Heart right ventricle (tissue), 16 donors: ENCODE measurements at regions of chr10 and their contacts with region 1.

Region 1: GRCh38 chr10:125822878-125823662 is at the starts of genes BCCIP and UROS:
- DNase-seq: peak; percentile 92
- ATAC-seq: peak; percentile 93 to 98 (median 96)
- H3K4me3 ChIP-seq: peak within 1 kb of the TSS; percentile 76 to 100 (median 93)
- H3K27ac ChIP-seq: peak within 1 kb of the TSS; percentile 80 to 99 (median 91)
- H3K4me1 ChIP-seq: peaks cover 15 to 47% (median 32%) of the 10 kb centered on the region in 9 donors
- H3K27me3 ChIP-seq: no peaks in the 10 kb centered on the region
- CTCF ChIP-seq: peak in 1 of 9 donors; percentile 9
- total RNA-seq, gene BCCIP: 35.6 to 53.1 (median 44.3) TPM
- total RNA-seq, gene UROS: 53.5 to 84.3 (median 70.8) TPM

Region 2: DNA sequence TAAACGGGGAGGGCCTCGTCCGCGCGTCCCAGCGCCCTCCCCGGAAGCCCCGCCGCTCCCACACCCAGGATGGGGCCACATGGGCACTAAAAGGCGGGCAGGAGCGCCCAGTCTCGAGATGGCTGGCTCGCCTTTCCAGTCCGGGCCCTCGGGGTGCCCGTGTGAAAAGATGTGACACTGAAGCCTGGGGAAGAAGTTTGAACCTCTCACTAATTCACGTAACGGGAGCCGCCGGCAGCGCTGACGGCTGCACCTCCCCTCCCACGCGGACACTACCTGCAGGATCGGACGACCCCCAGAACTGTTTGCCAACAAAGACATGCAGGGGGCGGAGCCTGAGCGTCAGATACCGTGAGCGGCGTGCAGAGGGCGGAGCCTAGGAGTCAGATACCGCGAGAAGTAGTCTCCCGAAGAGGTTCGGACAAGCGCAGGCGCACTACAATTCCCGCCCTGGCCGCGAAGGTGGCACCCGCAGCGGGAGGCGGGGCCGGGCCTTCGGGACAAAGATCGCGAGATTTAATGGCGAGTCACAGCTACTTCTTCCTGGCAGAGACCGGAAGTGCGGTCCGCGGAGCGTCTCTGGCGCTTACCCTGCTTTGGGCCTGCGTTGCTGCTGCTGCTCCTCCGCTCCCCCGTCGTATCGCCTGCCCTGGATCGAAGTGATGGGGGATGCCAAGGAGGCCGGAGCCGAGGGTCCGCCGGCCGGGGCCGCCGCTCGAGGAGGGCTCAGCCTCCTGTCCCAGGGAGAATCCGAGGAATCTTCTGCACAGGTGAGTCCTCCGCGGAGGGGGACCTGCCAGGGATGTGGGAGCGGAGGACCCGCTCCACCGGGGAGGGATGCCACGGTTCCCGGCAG is 103.7 kb before region 1 on chr10 and contains the start of gene EDRF1:
- intact Hi-C with region 1: loop called in 4 of 10 experiments (anchors 5 to 10 kb)
- DNase-seq: peak; percentile 99
- ATAC-seq: peak; percentile 100
- H3K4me3 ChIP-seq: peak within 1 kb of the TSS; percentile 83 to 97 (median 90)
- H3K27ac ChIP-seq: peak within 1 kb of the TSS; percentile 65 to 94 (median 88)
- H3K4me1 ChIP-seq: peaks cover 5 to 29% (median 15%) of the 10 kb centered on the region in 9 donors
- H3K27me3 ChIP-seq: no peaks in the 10 kb centered on the region
- CTCF ChIP-seq: no peak
- total RNA-seq, gene EDRF1: 7.7 to 13.2 (median 10.2) TPM

Region 3: GRCh38 chr10:126397640-126398382 is 574.7 kb after region 1 on chr10:
- intact Hi-C with region 1: no loop called
- DNase-seq: no peak
- ATAC-seq: no peak
- H3K4me3 ChIP-seq: no peak overlapping the region
- H3K27ac ChIP-seq: peak overlapping the region in 1 of 10 donors; percentile 46
- H3K4me1 ChIP-seq: no peaks in the 10 kb centered on the region
- H3K27me3 ChIP-seq: peaks cover 0 to 23% (median 0%) of the 10 kb centered on the region in 7 donors
- CTCF ChIP-seq: no peak